ENCODE measurements at regions of chr6 and their contacts with region 1.

Region 1: GRCh38 chr6:26322645-26323482 is 42.1 kb upstream of the BTN3A2 start:
- DNase-seq: peak in 3 of 4 experiments; percentile 43 to 96 (median 81)
- ATAC-seq: peak; percentile 62
- H3K4me3 ChIP-seq: peak overlapping the region; percentile 59
- H3K27ac ChIP-seq: peak overlapping the region; percentile 75
- H3K4me1 ChIP-seq: peaks cover 8 to 24% of the 10 kb centered on the region in 2 experiments
- H3K27me3 ChIP-seq: no peaks in the 10 kb centered on the region
- CTCF ChIP-seq: no peak
- EP300 ChIP-seq: peak; percentile 54
- POLR2A ChIP-seq: no peak
- RAD21 ChIP-seq: peak in 1 of 2 experiments; percentile 27; a peak in 1 of 4 replicates

Region 2: GRCh38 chr6:26175428-26176181 is 147.3 kb before region 1 on chr6:
- CTCF ChIA-PET with region 1: no interaction called
- POLR2A ChIA-PET with region 1: interaction called, 6 read pairs
- in situ Hi-C with region 1: no loop called
- intact Hi-C with region 1: loop called (anchors 2 kb)
- DNase-seq: peak; percentile 60 to 88 (median 71)
- ATAC-seq: peak; percentile 41
- H3K4me3 ChIP-seq: no peak overlapping the region
- H3K27ac ChIP-seq: no peak overlapping the region
- H3K4me1 ChIP-seq: peaks cover 14% of the 10 kb centered on the region in 2 experiments
- H3K27me3 ChIP-seq: no peaks in the 10 kb centered on the region
- CTCF ChIP-seq: peak; percentile 59 to 87 (median 77)
- EP300 ChIP-seq: no peak; the same call in 1 of the 2 replicates
- POLR2A ChIP-seq: no peak
- RAD21 ChIP-seq: peak; percentile 87 to 88

Region 3: DNA sequence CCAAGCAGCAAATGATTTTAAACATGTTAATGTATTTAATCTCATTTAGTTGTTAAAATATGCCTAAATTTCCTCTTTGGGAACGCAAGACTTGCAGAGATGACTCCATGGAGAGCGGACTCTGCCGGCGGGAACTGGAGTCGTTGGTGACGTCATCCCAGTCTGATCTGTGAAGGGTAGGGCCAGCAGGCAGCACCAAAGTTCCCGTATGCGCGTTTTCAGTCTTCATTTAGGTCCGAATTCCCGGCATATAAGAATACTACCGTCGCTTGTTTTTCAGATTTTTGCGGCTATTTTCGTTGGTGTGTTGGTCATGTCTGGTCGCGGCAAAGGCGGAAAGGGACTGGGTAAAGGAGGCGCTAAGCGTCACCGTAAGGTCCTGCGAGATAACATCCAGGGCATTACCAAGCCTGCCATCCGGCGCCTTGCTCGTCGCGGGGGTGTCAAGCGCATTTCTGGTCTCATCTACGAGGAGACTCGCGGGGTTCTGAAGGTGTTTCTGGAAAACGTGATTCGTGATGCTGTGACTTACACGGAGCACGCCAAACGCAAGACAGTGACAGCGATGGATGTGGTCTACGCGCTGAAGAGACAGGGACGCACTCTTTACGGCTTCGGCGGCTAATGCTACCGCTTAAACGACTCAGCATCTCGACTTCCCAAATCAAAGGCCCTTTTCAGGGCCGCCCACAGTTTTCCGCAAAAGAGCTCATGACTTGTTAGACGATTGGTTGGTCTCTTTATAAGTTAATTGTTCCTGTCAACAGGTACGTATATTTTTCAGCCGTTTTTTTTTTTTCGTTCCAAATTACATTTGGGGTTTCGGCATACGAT is 118.3 kb before region 1 on chr6:
- CTCF ChIA-PET with region 1: no interaction called
- POLR2A ChIA-PET with region 1: interaction called, 71 read pairs
- in situ Hi-C with region 1: no loop called
- intact Hi-C with region 1: no loop called
- DNase-seq: peak; percentile 85 to 99 (median 92)
- ATAC-seq: peak; percentile 67
- H3K4me3 ChIP-seq: peak overlapping the region; percentile 57
- H3K27ac ChIP-seq: peak overlapping the region; percentile 99
- H3K4me1 ChIP-seq: peaks cover 9 to 21% of the 10 kb centered on the region in 2 experiments; a peak in 4 of 5 replicates
- H3K27me3 ChIP-seq: no peaks in the 10 kb centered on the region
- CTCF ChIP-seq: peak in 2 of 3 experiments; percentile 67 to 70; a peak in 5 of 6 replicates
- EP300 ChIP-seq: peak; percentile 95
- POLR2A ChIP-seq: peak; percentile 100
- RAD21 ChIP-seq: peak in 1 of 2 experiments; percentile 29; a peak in 2 of 4 replicates

Region 4: DNA sequence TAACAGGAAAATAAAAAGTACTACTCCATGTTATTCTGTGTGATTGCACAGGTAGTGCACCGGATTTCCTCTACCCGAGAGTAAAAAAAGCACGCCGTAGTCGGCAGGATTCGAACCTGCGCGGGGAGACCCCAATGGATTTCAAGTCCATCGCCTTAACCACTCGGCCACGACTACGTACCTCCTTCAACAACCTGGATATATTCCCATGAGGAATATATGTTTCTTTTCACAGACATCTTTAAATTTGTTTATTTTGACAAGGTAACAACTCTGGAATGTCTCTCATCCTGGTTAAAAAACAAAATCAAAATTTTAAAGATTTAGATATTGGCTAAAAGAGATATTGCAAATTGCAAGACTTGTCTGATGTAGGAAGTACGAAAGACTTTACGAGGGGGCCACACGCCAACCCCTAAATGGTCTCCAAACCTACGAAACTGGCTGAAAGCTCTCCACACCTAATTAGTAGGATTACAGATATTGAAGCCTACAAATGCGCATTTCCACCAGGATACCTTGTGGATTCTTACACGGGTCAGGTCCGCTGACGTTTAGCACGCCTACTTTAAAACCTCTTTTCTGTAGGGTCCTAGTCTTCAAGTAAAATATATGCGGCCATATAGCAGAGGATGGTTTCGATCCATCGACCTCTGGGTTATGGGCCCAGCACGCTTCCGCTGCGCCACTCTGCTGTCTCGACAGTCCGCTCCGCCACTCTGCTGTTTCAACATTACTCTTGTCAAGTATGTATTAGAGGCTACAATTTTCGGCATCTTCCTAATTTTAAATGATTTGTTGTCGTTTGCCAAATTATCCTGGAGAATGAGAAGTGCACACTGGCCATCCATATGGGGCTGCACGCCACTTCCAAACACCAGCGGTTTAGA is 10.1 kb before region 1 on chr6:
- CTCF ChIA-PET with region 1: no interaction called
- POLR2A ChIA-PET with region 1: interaction called, 11 read pairs
- in situ Hi-C with region 1: no loop called
- intact Hi-C with region 1: loop called (anchors 1 kb)
- DNase-seq: peak; percentile 69 to 95 (median 72)
- ATAC-seq: peak; percentile 76
- H3K4me3 ChIP-seq: peak overlapping the region; percentile 53
- H3K27ac ChIP-seq: peak overlapping the region; percentile 66
- H3K4me1 ChIP-seq: peaks cover 4 to 34% of the 10 kb centered on the region in 2 experiments
- H3K27me3 ChIP-seq: no peaks in the 10 kb centered on the region
- CTCF ChIP-seq: no peak; a peak in 1 of 6 replicates
- EP300 ChIP-seq: peak; percentile 65
- POLR2A ChIP-seq: no peak
- RAD21 ChIP-seq: peak in 1 of 2 experiments; percentile 45; a peak in 2 of 4 replicates

Region 5: DNA sequence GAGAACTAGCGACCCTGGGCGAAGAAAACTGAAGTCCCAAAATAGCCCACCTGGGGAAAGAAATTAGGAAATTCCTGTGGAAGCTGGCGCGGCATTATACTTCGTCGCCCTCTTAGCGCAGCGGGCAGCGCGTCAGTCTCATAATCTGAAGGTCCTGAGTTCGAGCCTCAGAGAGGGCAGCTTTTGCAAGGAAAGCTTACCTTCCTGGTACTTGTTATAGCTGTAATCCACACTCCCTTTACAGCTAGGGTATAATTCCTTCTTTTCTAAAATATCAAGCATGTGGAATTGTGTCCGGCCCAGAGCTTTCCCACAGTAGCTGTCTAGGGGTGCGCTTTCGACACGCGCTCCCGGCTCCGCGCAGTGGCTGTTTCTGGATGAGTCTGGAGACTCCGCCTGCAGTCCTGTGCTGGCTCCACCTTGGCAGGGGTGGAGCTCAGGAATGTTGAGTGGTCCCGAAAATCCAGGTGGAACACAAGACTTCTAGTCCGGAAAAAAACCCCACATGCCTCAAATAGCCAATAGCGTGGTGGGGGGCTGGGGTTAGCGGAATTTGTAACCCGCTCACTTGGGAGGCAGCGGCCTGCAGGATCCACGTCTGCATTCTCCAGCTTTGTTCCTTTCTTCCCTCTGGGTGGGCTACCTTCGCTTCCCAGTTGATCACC is 420.4 kb after region 1 on chr6:
- CTCF ChIA-PET with region 1: no interaction called
- POLR2A ChIA-PET with region 1: no interaction called
- in situ Hi-C with region 1: no loop called
- intact Hi-C with region 1: no loop called
- DNase-seq: peak; percentile 61 to 79 (median 65)
- ATAC-seq: peak; percentile 85
- H3K4me3 ChIP-seq: peak overlapping the region; percentile 28
- H3K27ac ChIP-seq: no peak overlapping the region
- H3K4me1 ChIP-seq: peaks cover 12 to 17% of the 10 kb centered on the region in 2 experiments
- H3K27me3 ChIP-seq: no peaks in the 10 kb centered on the region; a peak in 1 of 5 replicates
- CTCF ChIP-seq: no peak
- EP300 ChIP-seq: 0 out of 2 replicates have a peak, but pooled peaks have one; percentile 17
- POLR2A ChIP-seq: no peak
- RAD21 ChIP-seq: no peak

Region 6: DNA sequence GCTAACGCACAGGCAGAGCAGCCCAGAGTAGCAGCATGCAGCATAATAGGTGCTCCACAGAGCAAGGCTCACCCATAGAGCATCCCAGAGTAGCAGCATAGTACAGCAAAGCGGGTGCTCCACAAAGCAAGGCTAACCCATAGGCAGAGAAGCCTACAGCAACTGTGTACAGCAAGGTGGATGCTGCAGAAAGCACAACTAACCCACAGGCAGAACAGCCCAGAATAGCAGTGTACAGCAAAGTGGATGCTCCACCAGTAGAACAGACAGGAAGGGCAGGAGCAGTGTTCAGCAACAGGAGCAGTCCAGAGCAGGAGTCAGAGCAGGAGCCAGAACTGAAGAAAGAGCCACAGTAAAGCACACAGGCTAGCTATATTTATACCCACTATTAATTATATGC is 791.9 kb after region 1 on chr6:
- CTCF ChIA-PET with region 1: no interaction called
- POLR2A ChIA-PET with region 1: no interaction called
- in situ Hi-C with region 1: loop called (anchors 25 kb)
- intact Hi-C with region 1: no loop called
- DNase-seq: no peak
- ATAC-seq: peak; percentile 40
- H3K4me3 ChIP-seq: no peak overlapping the region
- H3K27ac ChIP-seq: peak overlapping the region; percentile 61
- H3K4me1 ChIP-seq: peaks cover 10% of the 10 kb centered on the region in 2 experiments; a peak in 3 of 5 replicates
- H3K27me3 ChIP-seq: no peaks in the 10 kb centered on the region
- CTCF ChIP-seq: no peak
- EP300 ChIP-seq: no peak
- POLR2A ChIP-seq: no peak
- RAD21 ChIP-seq: no peak